Dorsolateral prefrontal cortex (tissue), 120 donors: ENCODE measurements at regions of chr12 and their contacts with region 1.

Region 1: GRCh38 chr12:116277393-116278278 is at the start of gene MED13L:
- DNase-seq: peak; percentile 67 to 93 (median 82)
- H3K4me3 ChIP-seq: peak within 1 kb of the TSS; percentile 46 to 92 (median 80)
- H3K27ac ChIP-seq: peak within 1 kb of the TSS; percentile 68 to 98 (median 93)
- H3K27me3 ChIP-seq: no peaks in the 10 kb centered on the region
- CTCF ChIP-seq: peak in 51 of 56 donors; percentile 17 to 87 (median 56)
- total RNA-seq, gene MED13L: 102 to 174 (median 140) TPM

Region 2: DNA sequence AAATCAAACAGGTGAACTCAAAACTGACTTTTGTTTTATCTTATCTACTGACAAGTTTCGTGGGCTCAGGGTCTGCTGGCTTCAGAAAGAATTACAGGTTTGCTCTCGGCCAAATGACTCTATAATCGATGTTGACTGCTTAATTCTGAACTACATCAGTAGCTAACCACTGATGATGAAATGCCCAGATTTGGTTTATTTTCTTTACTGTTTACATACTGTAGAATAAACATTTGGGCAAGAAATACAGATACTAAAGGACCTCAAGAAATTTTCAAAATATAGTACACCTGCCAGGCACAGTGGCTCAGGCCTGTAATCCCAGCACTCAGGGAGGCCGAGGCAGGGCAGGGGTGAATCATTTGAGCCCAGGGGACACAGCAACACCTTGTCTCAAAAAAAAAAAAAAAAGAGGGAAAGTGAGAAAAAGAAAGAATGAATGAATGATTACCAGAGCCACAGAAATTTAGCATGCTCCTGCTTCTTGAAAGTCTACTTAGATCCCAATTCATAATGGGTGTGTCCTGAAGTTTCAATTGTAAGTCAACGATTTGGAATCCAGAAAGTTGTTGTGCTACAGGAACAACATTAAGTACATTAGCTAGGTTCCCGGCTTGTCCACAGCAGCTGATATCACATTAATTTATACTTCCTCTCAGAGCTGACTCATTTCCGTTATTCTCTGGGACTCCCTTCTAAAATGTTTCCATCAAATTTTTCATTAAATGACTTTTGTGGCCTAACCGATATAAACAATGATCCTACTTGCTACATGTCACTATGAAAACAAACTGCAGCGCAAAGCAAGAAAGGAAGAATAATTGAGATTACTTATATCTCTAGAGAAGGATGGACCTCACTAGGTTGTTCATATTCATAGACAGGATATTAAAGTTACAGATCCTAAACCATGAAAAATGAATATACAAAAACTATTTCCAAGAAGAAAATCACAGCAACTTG is 134.4 kb before region 1 on chr12:
- intact Hi-C with region 1: loop called (anchors 5 to 10 kb)
- DNase-seq: no peak
- H3K4me3 ChIP-seq: no peak overlapping the region
- H3K27ac ChIP-seq: no peak overlapping the region
- H3K27me3 ChIP-seq: no peaks in the 10 kb centered on the region
- CTCF ChIP-seq: no peak

Region 3: DNA sequence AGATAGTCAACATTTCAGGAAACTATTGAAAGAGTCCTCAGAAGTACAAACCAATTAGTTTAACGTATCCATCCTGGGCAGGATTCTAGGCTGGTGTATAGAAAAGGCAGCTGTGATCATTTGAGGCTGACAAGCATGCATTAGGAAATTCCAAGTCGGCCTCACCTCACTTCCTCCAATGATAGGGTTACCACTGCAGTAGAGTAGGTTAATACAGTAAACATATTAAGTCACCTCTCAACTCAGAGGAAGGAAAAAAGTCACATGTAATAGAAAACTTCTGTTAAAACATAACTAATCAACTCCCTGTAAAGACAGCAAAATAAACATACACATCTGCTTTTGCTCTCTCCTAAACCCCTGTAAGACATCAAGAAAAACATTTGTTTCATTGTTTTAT is 33.6 kb before region 1 on chr12:
- intact Hi-C with region 1: loop called (anchors 5 kb)
- DNase-seq: no peak
- H3K4me3 ChIP-seq: no peak overlapping the region
- H3K27ac ChIP-seq: no peak overlapping the region
- H3K27me3 ChIP-seq: no peaks in the 10 kb centered on the region
- CTCF ChIP-seq: no peak

Region 4: DNA sequence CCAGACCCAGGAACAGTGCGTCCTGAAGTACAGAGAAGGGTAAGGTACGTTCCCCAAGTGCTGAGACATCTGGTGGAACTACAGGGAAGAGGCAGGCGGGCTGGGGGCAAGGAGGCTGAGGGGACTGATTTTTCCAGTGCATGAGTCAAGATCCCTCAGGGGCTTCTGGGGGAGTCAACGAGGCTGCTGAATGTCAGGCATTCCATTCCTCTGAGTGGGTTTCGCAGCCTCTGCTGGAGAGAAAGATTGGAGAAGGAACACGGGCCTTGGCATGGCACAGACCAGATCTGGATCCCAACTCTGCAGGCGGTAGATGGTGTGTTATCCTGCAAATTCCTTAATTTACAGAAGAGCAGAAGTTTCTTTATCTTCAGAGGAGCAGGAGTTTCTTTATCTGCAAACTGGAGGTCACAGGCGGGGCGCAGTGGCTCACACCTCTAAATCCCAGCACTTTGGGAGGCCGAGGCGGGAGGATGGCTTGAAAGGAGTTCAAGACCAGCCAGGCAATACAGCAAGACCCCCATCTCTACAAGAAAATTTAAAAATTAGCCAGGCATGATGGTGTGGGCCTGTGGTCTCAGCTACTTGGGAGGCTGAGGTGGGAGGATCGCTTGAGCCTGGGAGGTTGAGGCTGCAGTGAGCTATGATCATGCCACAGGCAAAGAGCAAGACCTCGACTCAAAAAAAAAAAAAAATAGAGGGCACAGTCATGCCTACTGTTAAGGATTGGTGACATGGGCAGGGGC is 148.9 kb after region 1 on chr12:
- intact Hi-C with region 1: no loop called
- DNase-seq: no peak
- H3K4me3 ChIP-seq: no peak overlapping the region
- H3K27ac ChIP-seq: no peak overlapping the region
- H3K27me3 ChIP-seq: no peaks in the 10 kb centered on the region
- CTCF ChIP-seq: no peak

Region 5: DNA sequence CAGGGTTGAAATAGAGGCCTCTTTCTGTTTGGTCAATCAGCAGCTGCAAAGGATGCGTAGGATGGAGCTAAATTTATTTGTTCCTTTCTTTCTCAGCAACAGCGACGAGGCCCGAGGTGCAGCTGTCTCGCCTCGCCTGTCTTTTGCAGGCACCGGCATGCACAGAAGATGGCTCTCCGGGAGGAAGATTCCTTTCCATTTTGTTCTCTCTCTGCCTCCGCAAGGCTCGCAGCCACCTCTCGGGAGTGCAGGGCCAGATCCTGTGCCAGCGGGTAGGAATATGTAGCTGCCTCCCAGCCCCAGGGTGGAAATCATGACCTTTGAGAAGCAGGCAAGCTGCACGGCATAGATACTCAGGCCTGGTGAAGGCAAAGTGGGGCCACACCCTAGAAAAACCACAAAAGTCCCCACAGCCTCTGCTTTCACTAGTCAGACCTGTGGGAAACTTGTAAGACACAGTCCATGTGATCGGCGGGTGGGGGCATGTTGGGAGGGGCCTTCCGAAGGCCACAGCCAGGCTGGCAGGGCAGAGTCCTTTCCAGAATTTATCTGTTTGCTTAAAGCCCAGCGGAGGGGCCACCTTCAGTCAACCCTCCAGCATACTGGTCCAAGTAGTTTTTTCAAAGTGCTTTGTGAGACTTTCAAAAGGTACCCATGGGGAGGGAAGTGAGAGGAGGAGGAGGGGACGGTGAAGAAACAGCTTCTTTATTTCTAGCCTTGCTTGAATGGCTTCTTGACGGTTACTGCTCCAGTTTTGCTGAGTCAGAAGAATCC is 281.7 kb after region 1 on chr12 and contains the start of gene MAP1LC3B2:
- intact Hi-C with region 1: loop called in 1 of 2 experiments (anchors 1 kb)
- DNase-seq: peak in 8 of 10 donors; percentile 35 to 81 (median 62)
- H3K4me3 ChIP-seq: peak within 1 kb of the TSS in 7 of 59 donors; percentile 1 to 37 (median 17)
- H3K27ac ChIP-seq: peak within 1 kb of the TSS in 57 of 59 donors; percentile 5 to 89 (median 77)
- H3K27me3 ChIP-seq: no peaks in the 10 kb centered on the region
- CTCF ChIP-seq: no peak
- total RNA-seq, gene MAP1LC3B2: 1.7 to 16.3 (median 6.4) TPM

Region 6: GRCh38 chr12:116599285-116600136 is 321.9 kb after region 1 on chr12:
- intact Hi-C with region 1: loop called (anchors 5 kb)
- DNase-seq: peak; percentile 51 to 78 (median 66)
- H3K4me3 ChIP-seq: peak overlapping the region; percentile 5 to 66 (median 42)
- H3K27ac ChIP-seq: peak overlapping the region in 48 of 59 donors; percentile 5 to 78 (median 60)
- H3K27me3 ChIP-seq: peaks cover 0 to 4% (median 0%) of the 10 kb centered on the region in 45 donors
- CTCF ChIP-seq: peak in 55 of 56 donors; percentile 42 to 79 (median 64)

Region 7: DNA sequence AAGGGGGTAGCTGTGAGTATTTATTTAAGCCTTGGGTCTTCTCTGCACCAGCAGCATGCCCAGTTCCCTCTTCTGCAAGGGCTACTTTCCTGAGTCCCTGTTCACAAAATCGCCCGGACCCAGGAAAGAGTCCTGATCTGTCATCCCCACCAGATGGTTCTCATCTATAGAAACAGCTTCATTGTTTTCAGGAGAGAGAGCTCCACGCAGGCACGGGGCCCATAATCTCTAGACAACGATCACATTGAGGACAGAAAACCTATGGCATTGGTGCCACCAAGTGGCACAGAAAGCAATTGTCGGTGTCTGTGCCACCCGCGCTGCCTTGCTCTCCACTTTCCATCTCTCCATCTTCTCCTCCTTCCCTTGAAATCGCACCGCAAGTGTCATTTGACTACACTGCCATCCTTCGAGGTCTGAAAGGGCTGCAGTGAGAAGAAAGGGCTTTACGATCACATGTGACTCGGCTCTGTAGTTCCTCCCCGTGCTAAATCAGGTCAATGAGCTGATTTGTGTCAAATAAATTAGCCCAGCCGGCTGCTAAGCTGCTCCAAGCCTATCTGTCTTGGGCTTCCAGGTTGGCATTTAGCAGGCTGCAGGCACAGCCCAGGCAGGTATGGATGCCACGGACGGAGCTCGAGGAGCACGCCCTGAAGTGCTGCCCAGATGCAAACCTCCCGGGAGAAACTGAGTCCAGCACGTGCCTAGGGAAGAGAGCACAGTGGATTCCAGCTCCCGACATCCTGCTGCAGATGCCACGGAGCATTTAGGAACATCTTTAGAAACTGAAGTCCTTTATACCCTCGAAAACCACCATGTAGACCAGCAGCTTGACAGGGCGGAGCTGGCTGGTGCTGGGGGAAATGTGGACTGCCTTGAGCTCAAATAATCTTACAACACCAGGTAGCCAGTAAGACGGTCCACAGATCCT is 431.5 kb after region 1 on chr12:
- intact Hi-C with region 1: loop called (anchors 2 to 5 kb)
- DNase-seq: peak; percentile 75 to 97 (median 90)
- H3K4me3 ChIP-seq: peak overlapping the region; percentile 29 to 66 (median 50)
- H3K27ac ChIP-seq: peak overlapping the region in 57 of 59 donors; percentile 21 to 95 (median 84)
- H3K27me3 ChIP-seq: no peaks in the 10 kb centered on the region
- CTCF ChIP-seq: peak; percentile 61 to 95 (median 84)